Astrocyte of the cerebellum (primary cell): ENCODE measurements at regions of chr21 and their contacts with region 1.

Region 1: DNA sequence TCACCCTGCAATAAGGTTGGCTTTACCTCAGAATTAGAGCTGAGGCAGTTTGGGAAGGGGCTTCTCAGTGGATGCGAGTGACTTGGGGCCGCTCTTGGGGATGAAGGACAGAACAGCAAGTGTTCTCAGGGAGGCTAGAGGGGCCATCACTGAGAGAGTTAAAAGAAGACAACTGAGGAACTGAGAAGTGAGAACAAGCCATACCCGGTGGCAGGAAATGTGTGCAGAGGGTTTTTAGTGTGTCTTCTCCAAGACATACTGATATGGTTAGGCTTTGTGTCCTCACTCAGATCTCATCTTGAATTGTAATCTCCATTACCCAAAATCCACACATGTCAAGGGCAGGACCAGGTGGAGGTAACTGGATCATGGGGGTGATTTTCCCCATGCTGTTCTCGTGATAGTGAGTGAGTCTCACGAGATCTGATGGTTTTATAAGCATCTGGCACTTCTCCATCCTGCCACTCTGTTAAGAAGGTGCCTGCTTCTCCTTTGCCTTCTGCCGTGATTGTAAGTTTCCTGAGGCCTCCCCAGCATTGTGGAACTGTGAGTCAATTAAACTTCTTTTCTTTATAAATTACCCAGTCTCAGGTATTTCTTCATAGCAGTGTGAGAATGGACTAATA is 75.8 kb downstream of the PCBP3 start:
- DNase-seq: no peak
- H3K4me3 ChIP-seq: no peak overlapping the region
- CTCF ChIP-seq: no peak

Region 2: GRCh38 chr21:45669382-45669781 is 49.9 kb before region 1 on chr21:
- in situ Hi-C with region 1: loop called (anchors 5 kb)
- DNase-seq: no peak
- H3K4me3 ChIP-seq: no peak overlapping the region
- CTCF ChIP-seq: no peak

Region 3: DNA sequence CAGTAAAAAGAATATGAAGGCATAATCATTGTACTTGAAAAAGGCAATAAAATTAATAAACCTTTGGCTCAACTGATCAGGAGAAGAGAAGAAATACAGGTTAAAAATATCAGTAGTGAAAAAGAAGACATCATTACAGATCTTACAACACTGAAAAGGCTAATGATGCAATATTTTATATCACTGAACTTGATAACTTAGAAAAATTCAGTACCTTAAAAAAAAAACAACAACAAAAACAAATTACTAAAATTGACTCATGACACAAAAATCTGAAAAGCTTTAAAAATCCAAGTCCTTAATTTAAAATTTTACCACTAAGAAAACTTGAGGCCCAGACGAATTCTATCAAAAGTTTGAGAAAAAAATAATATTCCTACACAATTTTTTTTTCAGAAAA is 30.6 kb before region 1 on chr21:
- in situ Hi-C with region 1: no loop called
- DNase-seq: no peak
- H3K4me3 ChIP-seq: no peak overlapping the region
- CTCF ChIP-seq: no peak